ENCODE measurements at regions of chr2 and their contacts with region 1.

Region 1: DNA sequence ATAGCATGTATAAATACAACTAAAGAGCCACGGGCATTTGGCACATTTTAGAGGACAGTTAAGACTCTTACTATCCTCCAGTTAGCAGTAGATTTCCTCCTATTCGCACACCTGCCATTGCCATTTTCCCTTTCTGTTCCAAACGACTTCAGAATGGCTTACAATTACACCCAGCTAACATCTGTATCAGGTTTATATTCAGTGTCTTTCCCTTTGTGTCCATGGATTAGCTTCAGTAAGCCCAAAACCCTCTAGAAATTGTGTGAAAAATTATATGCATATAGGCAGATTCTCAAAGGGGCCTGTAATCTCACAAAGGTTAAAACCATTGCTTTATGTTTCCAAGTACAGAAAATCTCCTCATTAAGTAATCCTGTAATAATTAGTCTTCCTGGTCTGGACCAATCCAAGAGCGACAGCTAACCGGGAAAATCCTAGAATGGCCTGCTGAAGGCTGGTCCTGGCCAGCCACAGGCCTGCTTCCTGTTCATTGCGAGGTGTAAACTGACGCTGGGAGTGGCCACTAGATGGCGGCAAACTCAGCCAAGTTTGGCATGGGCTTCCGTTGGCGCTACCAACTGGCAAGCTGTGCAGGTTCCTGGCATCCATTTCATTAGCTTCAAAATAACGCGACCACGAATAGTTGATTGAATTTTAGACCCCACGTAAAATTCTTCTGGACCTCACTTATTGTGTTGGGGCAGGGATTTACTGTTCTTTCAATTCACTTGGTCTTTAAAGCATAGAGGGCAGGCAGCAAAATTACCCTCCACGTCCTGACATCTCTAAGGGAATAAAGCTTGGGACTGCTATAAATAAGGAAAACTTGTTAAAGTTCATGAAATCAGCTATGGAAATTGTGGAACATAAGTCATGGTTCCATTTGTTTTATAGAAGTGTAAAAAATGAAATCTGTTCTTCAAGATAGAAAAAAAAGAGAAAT is 17.1 kb downstream of the ARHGAP25 start:
- DNase-seq: peak; percentile 93
- ATAC-seq: peak; percentile 95
- H3K4me3 ChIP-seq: peak overlapping the region in 3 of 5 experiments; percentile 8 to 51 (median 14)
- H3K4me3 Mint-ChIP-seq: peak overlapping the region; percentile 60
- H3K27ac ChIP-seq: peak overlapping the region; percentile 14 to 49
- H3K27ac Mint-ChIP-seq: peak overlapping the region; percentile 86
- H3K4me1 ChIP-seq: peaks cover 58 to 63% of the 10 kb centered on the region in 2 donors
- H3K4me1 Mint-ChIP-seq: peaks cover 75% of the 10 kb centered on the region
- H3K27me3 ChIP-seq: no peaks in the 10 kb centered on the region
- H3K27me3 Mint-ChIP-seq: no peaks in the 10 kb centered on the region
- CTCF ChIP-seq: peak; percentile 96

Region 2: DNA sequence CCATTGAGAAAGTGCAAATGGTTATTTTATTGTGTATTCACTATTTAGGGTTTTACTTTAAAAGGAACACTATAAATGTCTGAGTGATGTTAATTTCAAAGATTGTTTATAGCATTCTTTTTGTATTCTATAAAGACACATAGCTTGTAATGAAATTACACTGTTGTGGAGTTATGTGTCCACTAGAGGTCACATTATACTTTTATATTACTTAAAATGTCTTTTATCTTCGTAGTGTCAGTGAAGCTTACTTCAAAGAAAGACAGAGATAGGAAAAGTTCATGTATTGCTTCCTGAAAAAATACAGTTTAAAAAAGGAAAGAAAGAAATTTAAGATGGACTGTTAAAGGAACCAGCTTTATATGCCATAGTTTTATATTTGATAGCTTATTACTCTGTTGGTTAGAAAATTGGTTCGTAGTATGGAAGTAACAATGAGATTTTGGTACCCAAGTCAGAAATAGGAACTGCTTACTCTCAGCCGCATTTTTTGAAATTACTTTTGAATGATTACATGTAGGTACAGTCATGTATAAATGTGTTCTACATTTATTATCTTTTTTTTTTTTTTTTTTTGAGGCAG is 263.8 kb before region 1 on chr2:
- CTCF ChIA-PET with region 1: interaction called, 16 read pairs
- POLR2A ChIA-PET with region 1: no interaction called
- intact Hi-C with region 1: no loop called
- DNase-seq: peak; percentile 50
- ATAC-seq: no peak
- H3K4me3 ChIP-seq: no peak overlapping the region
- H3K4me3 Mint-ChIP-seq: no peak overlapping the region
- H3K27ac ChIP-seq: no peak overlapping the region
- H3K27ac Mint-ChIP-seq: no peak overlapping the region
- H3K4me1 ChIP-seq: peaks cover 0 to 2% of the 10 kb centered on the region in 2 donors
- H3K4me1 Mint-ChIP-seq: peaks cover 4% of the 10 kb centered on the region
- H3K27me3 ChIP-seq: no peaks in the 10 kb centered on the region
- H3K27me3 Mint-ChIP-seq: no peaks in the 10 kb centered on the region
- CTCF ChIP-seq: peak; percentile 76

Region 3: GRCh38 chr2:68734688-68735525 is 16.8 kb before region 1 on chr2 and contains the start of gene ARHGAP25:
- CTCF ChIA-PET with region 1: interaction called, 125 read pairs
- POLR2A ChIA-PET with region 1: interaction called, 4 read pairs
- intact Hi-C with region 1: loop called (anchors 2 kb)
- DNase-seq: peak; percentile 83
- ATAC-seq: peak; percentile 78
- H3K4me3 ChIP-seq: peak within 1 kb of the TSS; percentile 47 to 92 (median 64)
- H3K4me3 Mint-ChIP-seq: no peak within 1 kb of the TSS
- H3K27ac ChIP-seq: peak within 1 kb of the TSS; percentile 93
- H3K27ac Mint-ChIP-seq: no peak within 1 kb of the TSS
- H3K4me1 ChIP-seq: peaks cover 66 to 77% of the 10 kb centered on the region in 2 donors
- H3K4me1 Mint-ChIP-seq: peaks cover 55% of the 10 kb centered on the region
- H3K27me3 ChIP-seq: no peaks in the 10 kb centered on the region
- H3K27me3 Mint-ChIP-seq: no peaks in the 10 kb centered on the region
- CTCF ChIP-seq: no peak
- total RNA-seq, gene ARHGAP25: 207 and 221 TPM in 2 replicates

Region 4: DNA sequence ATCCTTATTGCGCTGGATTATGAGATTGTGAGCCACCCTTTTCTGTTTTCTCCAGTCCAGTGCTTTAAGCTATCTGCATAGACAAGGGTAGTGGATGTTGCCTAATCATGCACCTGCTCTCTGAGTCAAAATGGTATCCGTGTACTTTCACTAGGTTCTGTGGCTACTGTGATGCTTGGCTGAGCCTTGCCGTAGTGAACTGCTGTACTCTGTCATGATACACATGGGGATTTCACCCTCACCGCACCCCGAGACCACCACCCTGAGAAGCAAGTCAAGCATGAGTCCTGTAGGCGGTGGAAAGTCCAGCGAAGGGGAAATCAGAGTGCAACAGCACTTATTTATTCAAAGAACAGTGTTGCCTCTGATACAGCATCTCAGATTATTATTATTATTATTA is 37.9 kb after region 1 on chr2:
- CTCF ChIA-PET with region 1: interaction called, 66 read pairs
- POLR2A ChIA-PET with region 1: interaction called, 3 read pairs
- intact Hi-C with region 1: loop called (anchors 5 kb)
- DNase-seq: peak; percentile 96
- ATAC-seq: peak; percentile 89
- H3K4me3 ChIP-seq: peak overlapping the region in 1 of 5 experiments; percentile 27
- H3K4me3 Mint-ChIP-seq: peak overlapping the region; percentile 80
- H3K27ac ChIP-seq: peak overlapping the region; percentile 91 to 96
- H3K27ac Mint-ChIP-seq: peak overlapping the region; percentile 99
- H3K4me1 ChIP-seq: peaks cover 94 to 96% of the 10 kb centered on the region in 2 donors
- H3K4me1 Mint-ChIP-seq: peaks cover 55% of the 10 kb centered on the region
- H3K27me3 ChIP-seq: no peaks in the 10 kb centered on the region
- H3K27me3 Mint-ChIP-seq: no peaks in the 10 kb centered on the region
- CTCF ChIP-seq: no peak

Region 5: DNA sequence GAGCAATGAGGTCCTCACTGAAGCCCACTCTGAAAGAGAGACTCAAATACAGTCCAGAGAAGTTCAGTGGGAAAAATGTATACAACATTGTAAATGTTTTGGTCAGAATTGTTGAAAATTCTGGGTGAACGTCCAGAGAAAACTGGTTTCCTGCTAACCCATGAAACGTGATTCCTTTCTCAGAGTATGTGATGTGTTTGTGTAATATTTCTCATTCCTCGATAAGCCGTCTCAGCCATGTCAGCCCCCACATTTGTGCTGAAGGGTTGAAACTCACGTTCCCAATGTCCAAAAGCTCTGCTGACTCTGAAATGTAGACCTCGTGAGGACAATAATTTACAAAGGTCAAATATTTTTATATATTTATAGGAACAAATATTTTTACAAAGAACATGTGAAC is 67.9 kb after region 1 on chr2:
- CTCF ChIA-PET with region 1: interaction called, 41 read pairs
- POLR2A ChIA-PET with region 1: no interaction called
- intact Hi-C with region 1: no loop called
- DNase-seq: no peak
- ATAC-seq: no peak
- H3K4me3 ChIP-seq: no peak overlapping the region
- H3K4me3 Mint-ChIP-seq: no peak overlapping the region
- H3K27ac ChIP-seq: no peak overlapping the region
- H3K27ac Mint-ChIP-seq: no peak overlapping the region
- H3K4me1 ChIP-seq: peaks cover 0 to 5% of the 10 kb centered on the region in 2 donors
- H3K4me1 Mint-ChIP-seq: peaks cover 15% of the 10 kb centered on the region
- H3K27me3 ChIP-seq: no peaks in the 10 kb centered on the region
- H3K27me3 Mint-ChIP-seq: no peaks in the 10 kb centered on the region
- CTCF ChIP-seq: no peak

Region 6: DNA sequence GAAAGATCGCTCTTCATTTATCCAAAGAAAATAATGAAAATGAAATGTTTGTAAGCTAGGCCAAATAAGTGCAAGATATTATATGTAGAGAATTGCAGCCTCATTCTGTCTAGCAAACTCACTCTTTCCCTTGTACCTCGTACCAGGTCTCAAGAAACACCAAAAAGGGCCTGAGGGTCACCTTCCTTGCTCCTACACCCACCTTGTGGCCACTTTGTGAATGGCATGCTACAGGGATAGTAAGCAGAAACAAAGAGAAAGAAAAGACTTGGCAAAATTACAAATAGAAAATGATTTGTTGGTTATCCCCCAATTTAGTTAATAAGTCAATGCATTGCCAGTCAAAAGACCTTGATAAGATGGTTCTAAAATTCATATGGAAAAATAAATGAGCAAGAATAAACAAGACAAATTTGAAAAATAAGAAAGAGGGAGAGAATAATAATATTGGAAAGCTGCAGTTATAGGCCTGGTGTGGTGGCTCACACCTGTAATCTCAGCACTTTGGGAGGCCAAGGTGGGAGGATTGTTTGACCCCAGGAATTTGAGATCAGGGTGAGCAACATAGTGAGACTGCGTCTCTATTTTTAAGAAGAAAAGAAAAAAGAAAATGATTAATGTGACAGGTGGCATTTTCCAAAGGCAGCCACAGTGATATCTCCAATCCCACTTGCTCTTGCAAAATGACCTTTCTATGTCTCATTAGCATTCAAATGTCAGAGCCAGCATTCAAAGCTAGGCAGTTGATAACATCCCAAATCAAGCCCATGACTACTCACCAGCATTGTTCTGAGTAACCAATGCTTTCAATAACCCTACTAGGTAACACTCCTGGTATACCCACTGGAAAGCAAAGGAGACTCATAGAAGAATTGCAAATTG is 158.4 kb after region 1 on chr2:
- CTCF ChIA-PET with region 1: interaction called, 105 read pairs
- POLR2A ChIA-PET with region 1: interaction called, 5 read pairs
- intact Hi-C with region 1: loop called (anchors 1 kb)
- DNase-seq: peak; percentile 83
- ATAC-seq: peak; percentile 46
- H3K4me3 ChIP-seq: no peak overlapping the region
- H3K4me3 Mint-ChIP-seq: no peak overlapping the region
- H3K27ac ChIP-seq: no peak overlapping the region
- H3K27ac Mint-ChIP-seq: peak overlapping the region; percentile 62
- H3K4me1 ChIP-seq: peaks cover 24 to 29% of the 10 kb centered on the region in 2 donors
- H3K4me1 Mint-ChIP-seq: peaks cover 28% of the 10 kb centered on the region
- H3K27me3 ChIP-seq: no peaks in the 10 kb centered on the region
- H3K27me3 Mint-ChIP-seq: no peaks in the 10 kb centered on the region
- CTCF ChIP-seq: peak; percentile 95

Measured in B cell (primary cell).